CD8-positive, alpha-beta T cell (primary cell): ENCODE measurements at regions of chr1 and their contacts with region 1.

Region 1: DNA sequence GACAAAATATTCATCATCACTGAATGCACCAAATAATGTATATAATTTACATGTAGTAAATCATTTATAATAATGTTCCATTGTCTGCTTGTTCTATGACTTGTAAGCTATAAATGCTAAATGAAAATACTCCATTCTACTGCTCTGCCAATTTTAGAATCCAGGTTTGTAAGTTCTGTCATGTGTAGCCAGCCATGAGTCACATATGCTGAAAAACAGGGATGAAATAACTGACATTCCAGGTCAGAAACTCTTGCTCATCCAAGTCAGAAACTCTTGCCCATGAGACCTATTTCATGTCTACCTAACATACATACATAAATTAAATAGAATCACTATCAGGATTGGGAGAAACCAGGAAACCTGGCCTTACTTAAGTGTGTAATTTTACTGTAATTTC is 95.6 kb downstream of the ASH1L start:
- DNase-seq: peak in 1 of 9 experiments; percentile 15
- ATAC-seq: no peak
- H3K4me3 ChIP-seq: no peak overlapping the region
- H3K4me3 Mint-ChIP-seq: no peak overlapping the region
- H3K27ac ChIP-seq: no peak overlapping the region
- H3K27ac Mint-ChIP-seq: peak overlapping the region; percentile 87
- H3K4me1 ChIP-seq: peaks cover 17% of the 10 kb centered on the region
- H3K4me1 Mint-ChIP-seq: peaks cover 51% of the 10 kb centered on the region
- H3K27me3 ChIP-seq: no peaks in the 10 kb centered on the region
- H3K27me3 Mint-ChIP-seq: no peaks in the 10 kb centered on the region
- CTCF ChIP-seq: no peak

Region 2: GRCh38 chr1:155218854-155219591 is 248.0 kb before region 1 on chr1:
- CTCF ChIA-PET with region 1: no interaction called
- POLR2A ChIA-PET with region 1: no interaction called
- intact Hi-C with region 1: no loop called
- DNase-seq: peak in 1 of 9 experiments; percentile 59
- ATAC-seq: no peak
- H3K4me3 ChIP-seq: no peak overlapping the region
- H3K4me3 Mint-ChIP-seq: no peak overlapping the region
- H3K27ac ChIP-seq: peak overlapping the region in 1 of 2 experiments; percentile 57
- H3K27ac Mint-ChIP-seq: no peak overlapping the region
- H3K4me1 ChIP-seq: peaks cover 4% of the 10 kb centered on the region
- H3K4me1 Mint-ChIP-seq: peaks cover 10% of the 10 kb centered on the region
- H3K27me3 ChIP-seq: no peaks in the 10 kb centered on the region
- H3K27me3 Mint-ChIP-seq: no peaks in the 10 kb centered on the region
- CTCF ChIP-seq: no peak

Region 3: DNA sequence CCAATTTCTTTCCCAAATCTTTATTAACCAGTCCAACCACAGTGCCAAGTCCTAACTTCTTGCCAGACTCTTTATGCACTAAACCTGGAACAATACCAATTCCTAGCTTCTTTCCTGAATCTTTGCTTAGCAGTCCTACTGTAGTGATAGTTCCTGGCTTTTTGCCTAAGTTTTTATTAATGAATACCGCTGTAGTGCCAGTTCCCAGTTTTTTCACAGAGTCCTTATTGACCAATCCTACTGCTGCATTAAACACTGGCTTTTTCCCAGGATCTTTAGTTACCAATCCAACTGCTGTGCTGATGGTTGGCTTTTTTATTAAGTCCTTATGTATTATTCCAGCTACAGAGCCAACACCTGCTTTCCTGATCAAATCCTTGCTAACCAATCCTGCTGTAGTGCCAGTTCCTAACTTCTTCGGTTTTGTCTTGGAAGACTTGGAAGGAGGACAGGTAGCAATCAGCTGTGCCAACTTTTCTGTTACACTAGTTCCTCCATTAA is 14.8 kb after region 1 on chr1:
- CTCF ChIA-PET with region 1: no interaction called
- POLR2A ChIA-PET with region 1: no interaction called
- intact Hi-C with region 1: loop called in 1 of 2 experiments (anchors 2 kb)
- DNase-seq: no peak
- ATAC-seq: no peak
- H3K4me3 ChIP-seq: no peak overlapping the region
- H3K4me3 Mint-ChIP-seq: no peak overlapping the region
- H3K27ac ChIP-seq: no peak overlapping the region
- H3K27ac Mint-ChIP-seq: no peak overlapping the region
- H3K4me1 ChIP-seq: no peaks in the 10 kb centered on the region
- H3K4me1 Mint-ChIP-seq: peaks cover 14% of the 10 kb centered on the region
- H3K27me3 ChIP-seq: no peaks in the 10 kb centered on the region
- H3K27me3 Mint-ChIP-seq: no peaks in the 10 kb centered on the region
- CTCF ChIP-seq: no peak